PC-9 (cell line): ENCODE measurements at regions of chr17 and their contacts with region 1.

Region 1: GRCh38 chr17:19753049-19753444 is 4.9 kb upstream of the ALDH3A1 start:
- DNase-seq: peak; percentile 97 to 98
- H3K4me3 ChIP-seq: peak overlapping the region; percentile 52; the same call in 1 of the 2 replicates
- H3K27ac ChIP-seq: peak overlapping the region; percentile 100
- H3K4me1 ChIP-seq: peaks cover 64% of the 10 kb centered on the region
- H3K27me3 ChIP-seq: no peaks in the 10 kb centered on the region
- CTCF ChIP-seq: no peak

Region 2: DNA sequence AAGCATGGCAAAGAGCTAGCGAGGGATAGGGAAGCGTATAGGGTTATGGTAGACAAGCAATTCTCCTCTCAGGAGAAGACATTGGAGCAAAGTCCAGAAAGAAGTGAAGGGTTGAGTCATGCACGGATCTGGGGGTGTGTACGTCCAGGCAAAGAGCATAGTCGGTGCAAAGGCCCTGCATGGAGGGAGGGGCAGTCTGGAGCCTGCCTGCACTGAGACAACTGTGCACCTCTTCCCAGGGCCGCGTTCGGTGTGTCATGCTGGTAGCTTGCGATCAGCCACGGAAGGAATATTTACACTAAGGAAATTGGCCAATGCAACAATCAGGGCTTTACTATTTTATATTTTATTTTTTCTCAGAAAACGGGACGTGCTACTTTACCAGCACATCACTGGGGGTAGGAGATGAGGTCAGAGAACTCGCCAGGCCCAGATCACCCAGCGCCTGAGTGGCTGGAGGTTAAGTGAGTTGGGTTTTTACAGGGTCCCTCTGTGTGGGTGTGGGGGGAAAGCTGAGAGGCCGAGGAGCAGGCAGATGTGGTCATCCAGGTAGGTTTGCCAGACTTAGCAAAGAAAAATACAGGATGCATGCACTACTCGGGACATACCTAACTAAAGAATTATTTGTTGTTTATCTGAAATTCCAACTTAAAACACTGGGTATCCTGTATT is 383.8 kb before region 1 on chr17:
- CTCF ChIA-PET with region 1: interaction called, 3 read pairs
- POLR2A ChIA-PET with region 1: interaction called, 18 read pairs
- intact Hi-C with region 1: loop called (anchors 5 kb)
- DNase-seq: no peak
- H3K4me3 ChIP-seq: no peak overlapping the region
- H3K27ac ChIP-seq: no peak overlapping the region
- H3K4me1 ChIP-seq: no peaks in the 10 kb centered on the region
- H3K27me3 ChIP-seq: no peaks in the 10 kb centered on the region
- CTCF ChIP-seq: no peak

Region 3: DNA sequence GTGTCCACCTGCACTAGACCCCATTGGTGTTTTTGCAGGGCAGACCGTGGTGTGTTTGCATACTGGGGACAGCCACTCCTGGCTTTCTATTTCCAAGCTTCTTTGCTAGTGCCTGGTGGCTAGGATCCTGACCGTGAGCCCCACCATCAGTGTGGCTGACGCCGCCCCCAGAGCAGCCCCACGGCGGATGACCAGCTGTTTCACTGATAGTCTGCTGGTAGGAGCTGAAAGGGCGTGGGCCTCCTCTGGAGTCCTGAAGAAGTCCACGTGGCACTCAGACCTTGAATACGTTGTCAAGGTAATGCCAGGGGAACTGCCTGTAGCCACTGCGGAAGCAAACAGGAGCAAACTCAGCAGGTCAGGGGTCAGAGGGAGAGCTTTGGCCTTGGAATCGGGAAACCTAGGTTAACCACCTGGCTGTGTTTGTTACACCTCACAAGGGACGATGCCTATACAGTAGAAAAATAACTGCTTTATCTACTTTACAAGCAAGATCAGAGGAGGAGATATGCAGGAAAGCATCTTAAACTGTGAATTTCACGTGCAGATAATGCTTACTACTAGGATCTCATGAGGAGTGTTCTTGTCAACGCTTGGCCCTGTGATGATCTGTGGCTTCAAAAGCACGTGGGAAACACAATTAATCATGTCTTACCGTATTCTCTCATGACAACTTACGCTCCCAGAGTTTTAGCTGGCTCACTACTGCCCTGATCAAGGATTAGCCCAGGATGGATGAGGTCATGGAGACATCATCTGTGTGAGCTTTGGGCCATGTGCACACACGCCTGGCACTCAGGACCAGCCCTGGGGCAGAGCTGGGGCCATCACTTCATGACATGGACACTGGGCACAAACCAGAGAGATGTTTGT is 74.2 kb before region 1 on chr17:
- CTCF ChIA-PET with region 1: no interaction called
- POLR2A ChIA-PET with region 1: interaction called, 9 read pairs
- intact Hi-C with region 1: loop called (anchors 2 kb)
- DNase-seq: no peak
- H3K4me3 ChIP-seq: no peak overlapping the region
- H3K27ac ChIP-seq: no peak overlapping the region
- H3K4me1 ChIP-seq: peaks cover 27% of the 10 kb centered on the region
- H3K27me3 ChIP-seq: no peaks in the 10 kb centered on the region
- CTCF ChIP-seq: no peak

Region 4: DNA sequence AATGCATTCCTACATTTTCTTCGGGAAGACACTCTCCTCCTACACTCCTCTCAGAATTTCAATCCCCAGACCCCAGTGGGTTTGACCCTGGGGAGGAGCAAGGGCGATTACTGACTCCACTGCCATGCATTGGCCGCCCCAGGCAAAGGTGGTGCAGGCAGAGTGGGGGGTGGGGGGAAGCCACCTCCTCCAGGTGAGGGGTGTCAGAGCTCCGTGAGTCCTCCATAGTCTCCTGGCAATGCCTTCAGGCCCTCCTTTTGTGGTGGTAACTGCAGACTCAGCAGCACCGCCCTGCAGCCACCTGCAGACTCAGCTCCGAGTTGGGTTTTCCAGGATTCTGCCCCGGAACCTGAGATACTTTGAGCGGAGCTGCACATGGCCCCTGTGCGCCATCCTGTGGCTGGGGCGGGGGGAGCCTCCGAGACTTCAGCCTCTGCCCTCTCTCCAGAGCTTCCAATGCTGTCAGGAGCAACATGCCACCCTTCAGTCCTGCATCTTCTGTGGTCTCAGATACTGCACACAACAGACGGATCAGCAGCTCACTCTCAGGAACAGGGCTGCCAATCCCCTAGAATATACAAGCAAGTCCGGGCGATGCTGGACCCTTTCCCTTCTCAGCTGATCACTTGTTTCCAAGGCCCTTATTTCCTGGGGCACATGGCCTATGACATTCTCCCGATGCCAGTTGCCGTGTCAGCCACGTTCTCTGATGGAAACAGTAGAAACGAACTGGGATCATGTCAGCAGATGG is 34.3 kb before region 1 on chr17:
- CTCF ChIA-PET with region 1: interaction called, 8 read pairs
- POLR2A ChIA-PET with region 1: interaction called, 10 read pairs
- intact Hi-C with region 1: loop called (anchors 1 kb)
- DNase-seq: peak in 1 of 2 experiments; percentile 50
- H3K4me3 ChIP-seq: no peak overlapping the region
- H3K27ac ChIP-seq: peak overlapping the region; percentile 66
- H3K4me1 ChIP-seq: peaks cover 87% of the 10 kb centered on the region
- H3K27me3 ChIP-seq: no peaks in the 10 kb centered on the region
- CTCF ChIP-seq: peak; percentile 52

Region 5: GRCh38 chr17:19766422-19767270 is 13.6 kb after region 1 on chr17:
- CTCF ChIA-PET with region 1: interaction called, 16 read pairs
- POLR2A ChIA-PET with region 1: interaction called, 17 read pairs
- intact Hi-C with region 1: no loop called
- DNase-seq: peak in 1 of 2 experiments; percentile 85
- H3K4me3 ChIP-seq: no peak overlapping the region
- H3K27ac ChIP-seq: no peak overlapping the region
- H3K4me1 ChIP-seq: peaks cover 9% of the 10 kb centered on the region
- H3K27me3 ChIP-seq: no peaks in the 10 kb centered on the region
- CTCF ChIP-seq: peak; percentile 98

Region 6: DNA sequence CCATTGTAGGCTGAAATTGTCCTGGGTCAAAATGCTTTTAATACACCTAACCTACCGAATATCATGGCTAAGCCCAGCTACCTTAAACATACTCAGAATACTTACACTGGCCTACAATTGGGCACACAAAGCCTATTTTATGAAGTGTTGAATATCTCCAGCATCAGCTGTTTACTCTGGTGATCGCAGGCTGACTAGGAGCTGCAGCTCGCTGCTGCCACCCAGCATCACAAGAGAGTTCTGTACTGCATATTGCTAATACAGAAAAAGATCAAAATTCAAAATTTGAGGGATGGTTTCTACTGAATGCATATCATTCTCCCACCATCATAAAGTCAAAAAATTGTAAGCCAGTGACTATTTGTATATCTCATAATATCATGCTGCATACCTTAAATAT is 59.4 kb after region 1 on chr17:
- CTCF ChIA-PET with region 1: no interaction called
- POLR2A ChIA-PET with region 1: no interaction called
- intact Hi-C with region 1: no loop called
- DNase-seq: peak in 1 of 2 experiments; percentile 18
- H3K4me3 ChIP-seq: no peak overlapping the region
- H3K27ac ChIP-seq: no peak overlapping the region
- H3K4me1 ChIP-seq: no peaks in the 10 kb centered on the region
- H3K27me3 ChIP-seq: no peaks in the 10 kb centered on the region
- CTCF ChIP-seq: peak; percentile 64; the same call in 1 of the 2 replicates